Heart left ventricle (tissue), 16 donors: ENCODE measurements at regions of chr16 and their contacts with region 1.

Region 1: DNA sequence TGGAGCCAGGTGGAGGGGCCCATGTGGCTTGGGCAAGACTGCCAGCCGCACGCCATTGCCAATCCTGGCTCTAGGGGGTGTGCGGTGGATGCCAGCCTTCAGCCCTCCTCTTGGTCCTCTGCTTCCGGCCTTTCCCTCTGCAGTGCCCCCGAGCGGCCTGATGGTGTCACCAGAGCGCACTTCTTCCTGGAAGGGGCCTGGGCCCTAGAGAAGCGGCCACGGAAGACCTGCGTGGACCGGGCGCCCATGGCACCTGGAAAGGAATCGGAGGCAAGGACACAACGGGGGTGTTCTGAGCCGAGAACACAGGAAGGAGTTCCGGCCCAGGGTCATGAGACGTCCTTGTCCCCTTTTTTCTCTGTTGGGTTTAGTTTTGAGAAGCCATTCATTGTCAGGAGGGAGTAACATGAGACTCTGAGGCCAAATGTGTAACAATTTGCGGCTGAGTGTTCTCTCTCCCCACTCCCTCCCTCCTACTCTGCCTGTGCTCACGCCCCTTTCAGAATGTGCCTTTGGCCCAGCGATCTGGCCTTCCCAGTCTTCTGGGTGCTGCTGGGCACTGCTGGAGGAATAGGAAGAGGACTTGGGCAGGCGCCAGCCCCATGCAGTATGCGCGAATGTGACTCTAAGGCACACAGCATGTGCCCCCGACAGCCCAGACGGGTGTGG is 92.8 kb downstream of the IRX3 start:
- DNase-seq: peak; percentile 77 to 90 (median 84)
- ATAC-seq: peak; percentile 85 to 90 (median 89)
- H3K4me3 ChIP-seq: peak overlapping the region in 10 of 12 donors; percentile 5 to 52 (median 32)
- H3K27ac ChIP-seq: peak overlapping the region; percentile 52 to 97 (median 84)
- H3K4me1 ChIP-seq: peaks cover 0 to 19% (median 8%) of the 10 kb centered on the region in 12 donors
- H3K27me3 ChIP-seq: no peaks in the 10 kb centered on the region
- CTCF ChIP-seq: peak; percentile 75 to 95 (median 87)
- POLR2A ChIP-seq: no peak

Region 2: GRCh38 chr16:53945996-53946395 is 247.8 kb before region 1 on chr16:
- intact Hi-C with region 1: loop called in 3 of 10 experiments (anchors 5 to 10 kb)
- DNase-seq: no peak
- ATAC-seq: peak in 3 of 4 donors; percentile 60 to 76 (median 71)
- H3K4me3 ChIP-seq: no peak overlapping the region
- H3K27ac ChIP-seq: no peak overlapping the region
- H3K4me1 ChIP-seq: peaks cover 0 to 8% (median 0%) of the 10 kb centered on the region in 12 donors
- H3K27me3 ChIP-seq: no peaks in the 10 kb centered on the region
- CTCF ChIP-seq: peak; percentile 51 to 78 (median 72)
- POLR2A ChIP-seq: no peak

Region 3: GRCh38 chr16:54277845-54278703 is 84.3 kb after region 1 on chr16:
- intact Hi-C with region 1: loop called in 5 of 10 experiments (anchors 5 kb)
- DNase-seq: no peak
- ATAC-seq: no peak
- H3K4me3 ChIP-seq: no peak overlapping the region
- H3K27ac ChIP-seq: no peak overlapping the region
- H3K4me1 ChIP-seq: peaks cover 0 to 10% (median 5%) of the 10 kb centered on the region in 12 donors
- H3K27me3 ChIP-seq: peaks cover 0 to 30% (median 0%) of the 10 kb centered on the region in 9 donors
- CTCF ChIP-seq: no peak
- POLR2A ChIP-seq: no peak

Region 4: GRCh38 chr16:54817446-54817845 is 623.6 kb after region 1 on chr16:
- intact Hi-C with region 1: loop called in 2 of 10 experiments (anchors 5 to 10 kb)
- DNase-seq: peak in 2 of 5 donors; percentile 8 to 33
- ATAC-seq: peak in 3 of 4 donors; percentile 47 to 69 (median 69)
- H3K4me3 ChIP-seq: no peak overlapping the region
- H3K27ac ChIP-seq: no peak overlapping the region
- H3K4me1 ChIP-seq: peaks cover 0 to 6% (median 0%) of the 10 kb centered on the region in 12 donors
- H3K27me3 ChIP-seq: peaks cover 0 to 7% (median 0%) of the 10 kb centered on the region in 9 donors
- CTCF ChIP-seq: peak in 9 of 12 donors; percentile 6 to 55 (median 42)
- POLR2A ChIP-seq: no peak